Transverse colon (tissue), 4 donors: ENCODE measurements at regions of chr21 and their contacts with region 1.

Region 1: DNA sequence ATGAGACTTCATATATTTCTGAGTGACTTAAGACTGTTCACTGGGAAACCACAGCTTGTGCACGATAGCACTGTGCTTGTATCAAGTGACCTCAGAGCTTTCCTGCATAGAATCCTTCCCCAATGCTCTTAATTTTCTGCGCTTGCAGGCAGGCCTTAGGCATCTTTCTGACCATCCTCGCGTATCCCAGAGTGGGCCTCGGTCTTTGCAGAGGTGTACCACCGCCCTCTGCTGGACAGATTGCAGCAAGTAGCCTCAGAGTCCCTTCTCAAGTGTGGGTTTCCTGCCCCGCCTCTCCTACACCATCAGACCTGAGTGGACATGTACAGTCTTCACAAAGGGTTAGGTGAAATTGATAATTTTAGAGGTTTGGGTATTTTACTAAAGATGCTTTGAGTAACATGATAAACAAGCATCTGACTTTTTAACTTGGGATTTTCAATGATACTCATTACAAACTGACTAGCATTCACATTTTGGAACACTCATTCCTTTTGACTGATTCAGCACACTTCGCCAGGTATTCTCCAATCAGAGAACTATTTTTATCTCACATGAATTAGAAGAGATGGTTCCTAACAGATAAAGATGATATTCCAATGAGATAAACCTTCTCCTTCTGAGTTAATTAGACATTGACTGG is 246.5 kb upstream of the USP25 start:
- DNase-seq: peak; percentile 90
- H3K4me3 ChIP-seq: no peak overlapping the region
- H3K27ac ChIP-seq: no peak overlapping the region
- H3K4me1 ChIP-seq: peaks cover 0 to 3% (median 0%) of the 10 kb centered on the region in 4 donors
- H3K27me3 ChIP-seq: no peaks in the 10 kb centered on the region
- CTCF ChIP-seq: peak; percentile 87 to 91 (median 88)
- EP300 ChIP-seq: no peak
- POLR2A ChIP-seq: no peak

Region 2: DNA sequence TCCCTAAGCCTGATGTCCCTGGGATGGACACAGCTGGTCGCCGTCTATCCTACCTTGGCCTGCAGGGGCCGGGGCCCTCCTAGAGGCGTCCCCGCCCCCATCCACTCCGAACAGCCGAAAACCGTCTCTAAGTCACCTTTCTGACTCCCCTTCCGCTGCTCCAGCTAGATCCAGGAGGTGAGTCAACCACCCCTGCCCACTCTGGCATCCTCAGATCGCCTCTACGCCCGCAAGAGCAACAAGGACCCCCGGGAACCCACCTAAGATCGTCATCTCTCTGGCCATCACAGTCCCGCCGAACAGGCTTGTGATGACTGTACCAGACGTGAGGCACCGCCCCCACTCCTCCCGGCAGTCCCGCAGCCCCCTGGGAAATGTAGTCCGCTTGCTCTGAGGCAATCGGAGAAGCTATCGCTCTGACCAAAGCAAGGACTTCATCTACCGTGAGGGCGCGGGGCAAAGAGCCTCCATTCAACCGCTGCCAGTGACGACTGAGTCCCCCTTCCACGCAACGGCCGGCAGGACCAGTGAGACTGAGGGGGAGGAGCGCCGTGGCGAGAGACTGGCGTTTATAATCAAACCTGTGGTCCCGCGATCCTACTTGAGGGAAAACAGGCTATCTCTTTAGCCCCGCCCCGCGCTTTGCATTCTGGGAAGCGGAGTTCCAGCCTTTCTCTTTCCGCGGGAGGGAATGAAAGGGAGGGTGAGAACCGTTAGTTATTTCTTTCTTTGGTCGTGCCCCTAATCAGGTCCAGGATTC is 1100.2 kb before region 1 on chr21 and contains the start of gene HSPA13:
- in situ Hi-C with region 1: loop called in 1 of 4 experiments (anchors 25 kb)
- intact Hi-C with region 1: no loop called
- DNase-seq: peak; percentile 100
- H3K4me3 ChIP-seq: peak within 1 kb of the TSS; percentile 77 to 96 (median 84)
- H3K27ac ChIP-seq: peak within 1 kb of the TSS; percentile 88 to 93 (median 92)
- H3K4me1 ChIP-seq: peaks cover 17 to 37% (median 17%) of the 10 kb centered on the region in 4 donors
- H3K27me3 ChIP-seq: no peaks in the 10 kb centered on the region
- CTCF ChIP-seq: peak in 1 of 5 experiments; percentile 9
- EP300 ChIP-seq: no peak
- POLR2A ChIP-seq: peak; percentile 77
- total RNA-seq, gene HSPA13: 1.9 to 20.7 (median 13.6) TPM

Region 3: GRCh38 chr21:14403681-14404318 is 1079.5 kb before region 1 on chr21:
- in situ Hi-C with region 1: loop called in 3 of 4 experiments (anchors 25 kb)
- intact Hi-C with region 1: no loop called
- DNase-seq: no peak
- H3K4me3 ChIP-seq: no peak overlapping the region
- H3K27ac ChIP-seq: no peak overlapping the region
- H3K4me1 ChIP-seq: no peaks in the 10 kb centered on the region
- H3K27me3 ChIP-seq: no peaks in the 10 kb centered on the region
- CTCF ChIP-seq: peak; percentile 47 to 56 (median 50)
- EP300 ChIP-seq: no peak
- POLR2A ChIP-seq: no peak

Region 4: DNA sequence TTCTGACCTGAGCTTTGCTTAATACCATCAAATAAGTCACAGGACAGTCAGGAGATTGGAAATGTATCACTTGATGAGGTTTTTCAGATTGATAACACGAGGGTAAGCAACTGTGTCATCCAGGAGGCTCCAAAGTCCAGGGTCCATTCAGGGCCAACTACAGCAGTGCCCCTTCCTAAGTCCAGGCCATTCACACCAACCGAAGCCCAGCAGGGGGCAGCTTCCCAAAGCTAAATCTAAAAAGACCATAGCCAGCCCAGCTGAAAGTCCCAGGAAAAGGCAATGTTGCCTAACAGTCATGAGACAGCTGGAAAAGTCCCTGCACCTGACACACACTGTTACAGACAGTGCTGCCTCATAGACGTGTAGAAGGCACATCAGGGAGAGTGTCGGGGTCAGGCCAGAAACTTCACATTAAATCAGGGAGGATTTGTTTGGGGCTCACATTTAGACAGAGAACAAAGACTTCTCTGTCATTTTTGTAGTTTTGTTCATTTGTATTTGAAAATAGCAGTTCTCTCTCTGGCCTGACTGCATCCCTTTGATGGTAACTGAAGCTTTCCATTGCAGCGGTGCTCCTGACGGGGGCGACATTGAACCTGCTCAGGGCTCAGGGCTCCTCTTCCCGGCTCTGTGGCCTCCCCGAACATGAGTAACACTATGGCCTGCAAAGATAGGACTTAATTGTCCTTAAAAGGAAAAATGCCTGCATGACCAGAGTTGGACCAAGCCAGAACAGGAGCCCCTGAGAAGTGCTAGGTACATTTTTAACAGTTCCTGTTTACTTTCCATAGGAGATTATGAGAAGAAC is 618.8 kb before region 1 on chr21:
- in situ Hi-C with region 1: loop called in 3 of 4 experiments (anchors 25 kb)
- intact Hi-C with region 1: loop called (anchors 5 kb)
- DNase-seq: peak; percentile 81
- H3K4me3 ChIP-seq: no peak overlapping the region
- H3K27ac ChIP-seq: peak overlapping the region; percentile 4 to 52 (median 23)
- H3K4me1 ChIP-seq: peaks cover 0 to 46% (median 6%) of the 10 kb centered on the region in 4 donors
- H3K27me3 ChIP-seq: no peaks in the 10 kb centered on the region
- CTCF ChIP-seq: peak; percentile 50 to 64 (median 57)
- EP300 ChIP-seq: no peak
- POLR2A ChIP-seq: no peak

Region 5: DNA sequence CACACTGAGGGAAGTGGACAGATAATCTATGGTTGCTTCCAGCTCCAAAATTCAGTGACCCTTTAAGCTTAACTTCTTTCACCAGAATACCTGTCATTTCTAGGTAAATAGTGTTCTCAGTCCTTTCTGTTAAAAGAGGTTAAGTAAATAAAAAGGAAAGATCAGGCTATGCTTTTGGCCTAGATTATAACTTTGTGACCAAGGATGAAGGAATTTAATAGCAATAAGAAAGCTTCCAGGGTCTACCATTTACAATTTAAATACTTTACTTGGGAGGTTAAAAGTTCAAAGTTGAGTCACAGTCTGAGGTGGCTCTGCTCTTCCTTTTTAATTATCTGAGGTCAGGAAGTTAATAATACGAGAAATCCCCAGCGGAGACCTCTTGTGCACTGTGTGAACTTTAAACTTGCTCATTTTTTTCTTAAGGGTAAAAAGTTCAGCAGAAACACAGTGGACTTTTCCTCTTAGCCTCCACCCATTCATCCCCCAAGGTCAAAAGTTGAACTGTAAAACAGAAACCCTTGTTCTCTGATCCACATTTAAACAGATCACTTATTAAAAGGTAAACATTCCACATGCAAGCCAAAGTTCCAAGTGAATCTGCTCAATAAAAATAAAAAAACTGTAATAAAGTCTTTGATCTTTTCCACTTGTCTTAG is 605.6 kb before region 1 on chr21:
- in situ Hi-C with region 1: loop called (anchors 10 to 25 kb)
- intact Hi-C with region 1: no loop called
- DNase-seq: no peak
- H3K4me3 ChIP-seq: no peak overlapping the region
- H3K27ac ChIP-seq: peak overlapping the region in 2 of 4 donors; percentile 6 to 37
- H3K4me1 ChIP-seq: peaks cover 0 to 35% (median 6%) of the 10 kb centered on the region in 4 donors
- H3K27me3 ChIP-seq: no peaks in the 10 kb centered on the region
- CTCF ChIP-seq: no peak
- EP300 ChIP-seq: no peak
- POLR2A ChIP-seq: no peak

Region 6: DNA sequence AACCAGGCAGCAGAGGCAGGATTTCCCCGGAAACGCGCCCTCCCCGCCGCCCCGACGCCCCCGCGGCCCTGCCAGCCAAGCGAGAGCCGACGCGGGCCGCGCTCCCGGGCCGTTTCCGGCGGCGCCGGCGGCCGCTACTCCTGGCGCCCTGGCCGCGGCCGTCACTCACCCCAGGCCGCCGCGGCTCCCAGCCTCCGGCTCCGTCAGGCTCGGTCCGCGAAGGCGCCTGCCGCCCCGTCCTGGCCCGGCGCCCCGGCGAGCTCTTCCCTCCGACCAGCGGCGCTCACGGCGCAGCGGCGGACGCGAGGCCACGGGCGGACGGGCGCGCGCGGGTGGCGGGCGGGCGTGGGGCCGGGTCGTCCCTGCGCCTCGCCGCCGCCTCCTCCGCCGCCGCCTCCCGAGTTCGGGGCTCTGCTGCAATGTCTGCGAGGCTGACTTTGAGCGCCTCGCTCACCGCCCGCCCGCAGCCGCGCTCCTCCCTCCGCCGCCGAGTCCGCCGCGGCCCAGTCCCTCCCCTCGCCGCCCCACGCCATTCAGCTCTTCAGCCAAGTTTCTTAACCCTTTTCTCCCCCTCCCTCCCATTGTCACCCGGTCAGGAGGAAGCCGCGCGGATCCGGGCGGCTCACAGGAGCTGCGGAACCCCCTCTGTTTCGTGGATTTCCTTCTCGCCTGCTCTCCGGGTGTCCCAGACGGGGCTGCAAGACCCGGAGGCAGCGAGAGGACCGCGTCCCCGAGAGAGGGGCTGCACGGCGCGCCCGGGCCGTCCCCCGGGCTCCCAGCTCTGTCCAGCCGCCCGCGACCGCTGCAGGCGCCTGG is 418.5 kb before region 1 on chr21 and contains the start of gene NRIP1:
- in situ Hi-C with region 1: loop called in 2 of 4 experiments (anchors 25 kb)
- intact Hi-C with region 1: no loop called
- DNase-seq: peak; percentile 93
- H3K4me3 ChIP-seq: peak within 1 kb of the TSS; percentile 89 to 99 (median 96)
- H3K27ac ChIP-seq: peak within 1 kb of the TSS; percentile 98 to 100 (median 100)
- H3K4me1 ChIP-seq: peaks cover 7 to 39% (median 32%) of the 10 kb centered on the region in 4 donors
- H3K27me3 ChIP-seq: no peaks in the 10 kb centered on the region
- CTCF ChIP-seq: no peak
- EP300 ChIP-seq: no peak
- POLR2A ChIP-seq: peak; percentile 83
- total RNA-seq, gene NRIP1: 38.5 to 63.7 (median 55.6) TPM

Region 7: GRCh38 chr21:15275615-15276200 is 207.6 kb before region 1 on chr21:
- in situ Hi-C with region 1: no loop called
- intact Hi-C with region 1: no loop called
- DNase-seq: no peak
- H3K4me3 ChIP-seq: no peak overlapping the region
- H3K27ac ChIP-seq: no peak overlapping the region
- H3K4me1 ChIP-seq: no peaks in the 10 kb centered on the region
- H3K27me3 ChIP-seq: no peaks in the 10 kb centered on the region
- CTCF ChIP-seq: no peak
- EP300 ChIP-seq: no peak
- POLR2A ChIP-seq: no peak